Dendritic cell treated with granulocyte-macrophage colony-stimulating factor and Interleukin-4, amounts not matched to agents 40 ng/mL and 50 ng/mL, for 4 days (primary cell): ENCODE measurements at regions of chr11 and their contacts with region 1.

Region 1: GRCh38 chr11:17077520-17078401 is at the start of gene RPS13:
- H3K4me3 Mint-ChIP-seq: peak within 1 kb of the TSS; percentile 87
- H3K27ac Mint-ChIP-seq: peak within 1 kb of the TSS; percentile 98
- H3K4me1 Mint-ChIP-seq: peaks cover 37% of the 10 kb centered on the region
- H3K27me3 Mint-ChIP-seq: no peaks in the 10 kb centered on the region

Region 2: DNA sequence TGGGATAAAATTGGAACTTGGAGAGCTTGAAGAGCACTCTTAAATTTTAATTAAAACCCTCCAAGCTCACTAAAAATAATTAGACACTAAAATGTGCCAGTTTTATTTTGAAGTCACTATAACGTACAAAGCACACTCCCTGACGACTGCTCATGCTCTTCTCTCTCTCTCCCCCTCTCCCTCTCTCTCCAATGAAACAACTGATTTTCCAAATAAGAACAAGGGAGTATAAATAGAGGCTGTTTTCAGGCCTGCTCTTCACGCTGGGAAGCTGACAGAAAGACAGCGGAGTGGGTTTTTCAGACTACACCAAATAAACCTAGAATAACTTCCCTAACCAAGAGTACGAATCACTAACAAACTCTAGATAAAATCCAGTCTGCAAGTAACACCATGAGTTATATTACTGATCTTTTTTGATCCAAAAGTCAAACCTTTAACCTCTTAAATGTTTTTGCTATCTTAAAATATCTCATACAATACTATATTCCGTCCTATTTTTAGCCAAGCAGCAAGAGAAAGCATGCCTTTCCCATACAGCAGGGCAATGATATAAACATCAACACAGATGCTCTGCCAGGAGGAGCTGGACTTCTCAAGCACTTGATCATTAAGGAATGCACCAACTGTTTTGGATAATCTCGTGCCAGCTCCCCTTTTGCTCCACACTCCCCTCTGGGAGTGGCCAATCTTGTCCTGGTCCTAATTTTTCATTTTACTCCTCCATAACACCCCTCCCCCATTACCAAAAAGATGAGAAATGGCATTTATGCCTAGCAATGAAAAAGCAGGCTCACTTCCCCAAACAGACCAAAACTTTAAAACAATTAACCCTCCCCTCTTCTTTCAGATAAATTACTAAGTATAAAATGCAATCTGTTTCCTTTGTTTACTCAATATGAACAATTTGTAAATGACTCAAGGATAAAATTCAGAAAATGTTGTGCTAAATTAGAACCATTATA is 838.3 kb before region 1 on chr11:
- intact Hi-C with region 1: no loop called
- H3K4me3 Mint-ChIP-seq: no peak overlapping the region
- H3K27ac Mint-ChIP-seq: no peak overlapping the region
- H3K4me1 Mint-ChIP-seq: no peaks in the 10 kb centered on the region
- H3K27me3 Mint-ChIP-seq: no peaks in the 10 kb centered on the region

Region 3: GRCh38 chr11:16738193-16738946 is 339.4 kb before region 1 on chr11 and contains the start of gene C11orf58:
- intact Hi-C with region 1: loop called (anchors 2 kb)
- H3K4me3 Mint-ChIP-seq: peak within 1 kb of the TSS; percentile 30
- H3K27ac Mint-ChIP-seq: no peak within 1 kb of the TSS
- H3K4me1 Mint-ChIP-seq: peaks cover 15% of the 10 kb centered on the region
- H3K27me3 Mint-ChIP-seq: no peaks in the 10 kb centered on the region

Region 4: DNA sequence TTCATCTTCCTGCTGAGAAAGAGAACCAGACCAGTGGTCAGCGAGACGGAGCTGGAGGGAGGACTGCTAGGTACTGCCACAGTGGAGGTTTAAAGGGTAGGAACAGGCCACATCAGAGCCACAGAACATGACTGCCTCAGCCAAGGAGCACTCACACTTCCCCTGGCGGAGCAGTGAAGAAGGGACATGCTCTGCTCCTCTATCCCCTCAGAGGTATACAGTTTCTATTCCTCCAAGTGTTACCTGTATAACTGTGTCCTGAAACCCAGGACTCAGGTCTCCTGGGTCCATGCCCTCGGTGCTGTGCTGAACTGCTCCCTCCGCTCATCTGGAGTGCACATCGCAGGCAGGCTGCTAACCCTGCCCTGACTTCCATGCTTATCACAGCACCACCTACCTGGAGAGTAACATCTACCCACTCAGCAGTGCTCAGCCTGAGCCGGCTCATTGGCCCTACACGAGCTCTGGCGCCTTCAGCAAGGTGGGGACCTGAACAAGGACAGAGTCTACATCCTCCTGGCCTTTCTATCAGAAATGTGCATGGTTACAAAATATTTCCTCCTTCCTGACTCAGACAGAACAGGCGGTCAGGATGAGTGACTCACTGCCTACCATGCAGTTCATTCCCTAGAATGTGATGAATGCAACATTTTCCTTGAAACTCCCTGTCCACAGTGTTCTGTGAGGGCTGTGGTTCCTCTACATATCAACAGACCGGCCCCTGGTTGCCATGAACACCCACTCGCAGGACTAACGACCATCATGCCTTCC is 286.4 kb before region 1 on chr11:
- intact Hi-C with region 1: loop called (anchors 5 kb)
- H3K4me3 Mint-ChIP-seq: peak overlapping the region; percentile 13
- H3K27ac Mint-ChIP-seq: peak overlapping the region; percentile 99
- H3K4me1 Mint-ChIP-seq: peaks cover 77% of the 10 kb centered on the region
- H3K27me3 Mint-ChIP-seq: no peaks in the 10 kb centered on the region

Region 5: DNA sequence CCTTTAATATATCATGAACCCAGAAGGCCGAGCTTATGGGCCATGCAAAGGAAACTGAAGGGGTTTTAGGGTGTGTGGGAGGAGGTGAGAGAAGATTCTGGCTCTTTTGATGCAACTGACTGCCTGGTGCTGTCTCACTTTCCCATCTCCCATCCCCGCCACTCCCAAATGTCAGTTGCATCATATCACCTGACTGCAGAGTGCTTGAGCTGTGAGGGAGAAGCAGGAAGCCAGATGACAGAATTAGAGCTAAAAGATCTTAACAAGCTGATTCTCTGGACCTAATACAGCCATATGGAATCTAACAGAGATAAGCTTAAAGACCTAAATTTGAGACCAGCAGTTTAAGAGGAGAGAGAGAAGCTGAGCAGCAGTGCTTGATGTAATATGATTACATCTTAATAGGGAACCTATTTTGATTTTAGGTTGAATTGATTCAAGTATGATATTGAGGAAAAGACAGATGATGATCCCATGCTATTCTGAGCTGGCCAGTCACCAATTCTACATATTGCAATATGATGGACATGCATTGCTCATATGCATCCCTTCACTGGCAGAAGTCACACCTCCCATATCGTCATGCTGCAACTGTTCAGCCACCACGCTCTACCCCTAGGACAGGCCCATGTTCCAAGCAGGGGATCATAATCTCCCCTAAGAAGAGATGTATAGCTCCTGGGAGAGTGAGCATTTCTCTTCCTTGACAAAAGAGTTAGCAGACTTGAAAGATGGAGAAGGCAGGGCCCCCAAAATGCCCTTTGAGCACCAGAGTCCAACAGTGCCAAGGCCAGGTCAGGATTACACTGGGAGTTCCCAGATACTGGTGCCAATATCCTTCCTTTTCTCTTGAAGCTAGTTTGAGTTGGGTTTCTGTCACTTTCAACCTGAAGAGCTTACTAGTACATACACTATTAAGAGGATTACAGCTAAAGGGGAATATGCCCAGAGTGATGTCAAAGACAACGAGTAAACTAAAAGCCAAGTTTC is 108.5 kb before region 1 on chr11:
- intact Hi-C with region 1: no loop called
- H3K4me3 Mint-ChIP-seq: no peak overlapping the region
- H3K27ac Mint-ChIP-seq: no peak overlapping the region
- H3K4me1 Mint-ChIP-seq: no peaks in the 10 kb centered on the region
- H3K27me3 Mint-ChIP-seq: no peaks in the 10 kb centered on the region

Region 6: DNA sequence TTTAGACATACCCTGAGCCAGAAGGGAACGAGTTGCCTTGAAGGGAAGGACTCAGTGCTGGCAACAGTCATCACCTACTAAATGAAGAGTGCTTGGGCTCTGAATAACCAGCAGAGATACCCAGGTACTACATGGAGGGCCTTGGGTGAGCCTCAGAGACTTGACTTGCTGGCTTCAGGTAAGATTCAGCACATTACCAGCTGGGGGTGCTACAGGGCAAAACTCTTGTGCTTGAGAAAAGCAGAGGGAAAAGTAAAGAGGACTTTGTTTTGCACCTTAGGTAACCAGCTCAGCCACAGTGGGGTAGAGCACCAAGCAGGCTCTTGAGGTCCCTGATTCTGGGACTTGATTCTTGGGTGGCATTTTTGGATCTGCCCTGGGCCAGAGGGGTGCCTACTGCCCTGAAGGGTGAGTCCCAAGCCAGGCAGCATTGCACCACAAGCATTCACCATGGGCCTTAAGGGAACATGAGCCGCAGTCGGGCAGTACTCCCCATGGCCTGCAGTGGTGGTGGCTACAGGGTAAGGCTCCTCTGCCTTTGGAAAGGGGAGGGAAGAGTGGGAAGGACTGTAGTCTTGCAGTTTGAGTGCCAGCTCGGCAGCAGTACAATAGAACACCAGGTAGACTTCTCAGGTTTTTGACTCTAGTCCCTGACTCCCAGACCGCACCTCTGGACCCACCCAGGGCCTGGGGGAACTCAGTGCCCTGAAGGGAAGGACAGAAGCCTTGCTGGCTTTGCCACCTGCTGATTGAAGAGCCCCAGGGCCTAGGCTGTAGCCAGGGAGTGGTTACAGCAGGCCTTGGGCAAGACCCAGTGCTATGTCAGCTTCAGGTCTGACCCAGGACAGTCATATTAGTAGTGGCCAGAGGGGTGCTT is 40.9 kb before region 1 on chr11:
- intact Hi-C with region 1: no loop called
- H3K4me3 Mint-ChIP-seq: no peak overlapping the region
- H3K27ac Mint-ChIP-seq: no peak overlapping the region
- H3K4me1 Mint-ChIP-seq: no peaks in the 10 kb centered on the region
- H3K27me3 Mint-ChIP-seq: no peaks in the 10 kb centered on the region

Region 7: DNA sequence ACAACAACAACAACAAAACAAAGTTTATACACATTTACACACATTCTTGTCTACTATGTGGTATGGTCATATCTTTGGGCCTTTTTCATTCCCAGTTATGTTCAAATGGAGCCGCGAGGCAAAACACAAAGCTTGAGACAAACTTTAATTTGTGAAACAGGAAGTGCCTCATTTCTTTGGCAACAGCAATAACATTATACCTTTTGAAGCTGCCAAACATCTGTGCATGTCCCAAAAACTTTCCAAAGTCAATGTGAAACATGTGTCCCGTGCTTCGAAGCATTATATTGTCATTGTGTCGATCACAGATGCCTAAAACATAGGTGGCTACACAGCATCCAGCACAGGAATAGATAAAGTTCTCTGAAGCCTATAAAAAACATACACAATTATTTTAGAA is 24.7 kb after region 1 on chr11:
- intact Hi-C with region 1: no loop called
- H3K4me3 Mint-ChIP-seq: no peak overlapping the region
- H3K27ac Mint-ChIP-seq: no peak overlapping the region
- H3K4me1 Mint-ChIP-seq: peaks cover 16% of the 10 kb centered on the region
- H3K27me3 Mint-ChIP-seq: no peaks in the 10 kb centered on the region

Region 8: GRCh38 chr11:17207317-17208258 is 129.8 kb after region 1 on chr11 and contains the start of gene PIK3C2A:
- intact Hi-C with region 1: loop called (anchors 5 kb)
- H3K4me3 Mint-ChIP-seq: peak within 1 kb of the TSS; percentile 88
- H3K27ac Mint-ChIP-seq: peak within 1 kb of the TSS; percentile 93
- H3K4me1 Mint-ChIP-seq: peaks cover 63% of the 10 kb centered on the region
- H3K27me3 Mint-ChIP-seq: no peaks in the 10 kb centered on the region

Region 9: GRCh38 chr11:17276236-17277023 is 198.7 kb after region 1 on chr11 and contains the start of gene NUCB2:
- intact Hi-C with region 1: loop called (anchors 5 kb)
- H3K4me3 Mint-ChIP-seq: peak within 1 kb of the TSS; percentile 95
- H3K27ac Mint-ChIP-seq: peak within 1 kb of the TSS; percentile 95
- H3K4me1 Mint-ChIP-seq: peaks cover 37% of the 10 kb centered on the region
- H3K27me3 Mint-ChIP-seq: peaks cover 3% of the 10 kb centered on the region

Region 10: DNA sequence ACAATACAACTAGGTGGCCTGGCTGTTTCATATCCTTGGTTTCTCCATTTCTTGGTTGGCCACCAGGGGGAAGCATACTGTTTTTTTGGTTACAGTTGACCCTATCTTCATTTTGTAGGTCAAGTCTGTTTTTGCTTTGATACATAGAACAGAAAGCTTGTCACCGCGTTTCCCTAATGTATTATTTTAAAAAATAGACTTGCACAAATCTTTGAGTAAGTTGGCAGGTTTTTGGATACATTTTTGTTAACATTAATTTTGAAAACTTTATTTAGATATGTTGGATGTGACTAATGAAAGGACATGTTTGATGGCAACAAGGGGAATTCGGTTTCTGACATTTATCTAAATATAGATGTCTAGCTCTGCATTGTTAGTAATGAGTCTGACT is 276.8 kb after region 1 on chr11:
- intact Hi-C with region 1: loop called (anchors 5 kb)
- H3K4me3 Mint-ChIP-seq: no peak overlapping the region
- H3K27ac Mint-ChIP-seq: no peak overlapping the region
- H3K4me1 Mint-ChIP-seq: peaks cover 28% of the 10 kb centered on the region
- H3K27me3 Mint-ChIP-seq: peaks cover 1% of the 10 kb centered on the region

Region 11: GRCh38 chr11:18012863-18013781 is 935.4 kb after region 1 on chr11 and contains the start of gene SERGEF:
- intact Hi-C with region 1: loop called (anchors 10 kb)
- H3K4me3 Mint-ChIP-seq: peak within 1 kb of the TSS; percentile 98
- H3K27ac Mint-ChIP-seq: peak within 1 kb of the TSS; percentile 88
- H3K4me1 Mint-ChIP-seq: peaks cover 39% of the 10 kb centered on the region
- H3K27me3 Mint-ChIP-seq: peaks cover 10% of the 10 kb centered on the region